Activated CD4-positive, alpha-beta memory T cell treated with anti-CD3 and anti-CD28 coated beads for 36 hours (primary cell): ENCODE measurements at regions of chr4 and their contacts with region 1.

Region 1: DNA sequence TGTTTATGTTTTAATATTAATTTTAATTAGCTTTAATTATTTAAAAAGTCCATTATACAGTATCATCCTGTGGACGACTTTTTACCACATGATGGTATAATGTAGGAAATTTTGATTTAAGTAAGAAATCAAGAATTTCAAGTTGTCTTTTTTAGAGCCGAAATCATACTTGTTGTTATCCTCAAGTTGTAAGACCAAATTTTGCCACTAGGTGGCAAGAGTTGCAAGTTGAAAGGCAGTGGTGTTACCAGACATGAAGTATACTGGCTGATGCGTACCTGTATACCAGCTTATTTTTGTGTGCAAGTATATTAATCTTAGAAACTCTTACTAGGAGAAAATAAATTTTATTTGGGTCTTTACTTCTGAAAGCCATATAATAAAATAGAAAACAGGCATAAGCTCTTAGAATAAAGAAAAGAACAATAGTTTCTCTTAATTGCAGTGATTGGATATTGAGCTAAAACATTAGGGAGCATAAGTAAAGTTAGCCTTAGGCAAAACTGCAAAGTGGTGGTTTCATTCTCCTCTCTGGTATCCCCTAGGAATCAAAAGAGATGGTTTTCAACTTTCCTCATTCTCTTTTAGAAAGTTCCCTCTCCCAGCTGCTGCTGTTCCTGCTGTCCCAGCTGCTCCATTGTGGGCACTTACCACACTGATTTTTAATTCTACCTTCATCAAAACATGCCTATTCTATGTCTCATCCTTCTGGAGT is 118.0 kb upstream of the WDFY3 start:
- DNase-seq: no peak
- H3K4me3 Mint-ChIP-seq: no peak overlapping the region
- H3K27ac Mint-ChIP-seq: no peak overlapping the region
- H3K4me1 Mint-ChIP-seq: no peaks in the 10 kb centered on the region
- H3K27me3 Mint-ChIP-seq: no peaks in the 10 kb centered on the region

Region 2: GRCh38 chr4:84312426-84313012 is 772.0 kb before region 1 on chr4:
- CTCF ChIA-PET with region 1: no interaction called
- POLR2A ChIA-PET with region 1: no interaction called
- intact Hi-C with region 1: no loop called
- DNase-seq: no peak
- H3K4me3 Mint-ChIP-seq: no peak overlapping the region
- H3K27ac Mint-ChIP-seq: no peak overlapping the region
- H3K4me1 Mint-ChIP-seq: no peaks in the 10 kb centered on the region
- H3K27me3 Mint-ChIP-seq: no peaks in the 10 kb centered on the region

Region 3: DNA sequence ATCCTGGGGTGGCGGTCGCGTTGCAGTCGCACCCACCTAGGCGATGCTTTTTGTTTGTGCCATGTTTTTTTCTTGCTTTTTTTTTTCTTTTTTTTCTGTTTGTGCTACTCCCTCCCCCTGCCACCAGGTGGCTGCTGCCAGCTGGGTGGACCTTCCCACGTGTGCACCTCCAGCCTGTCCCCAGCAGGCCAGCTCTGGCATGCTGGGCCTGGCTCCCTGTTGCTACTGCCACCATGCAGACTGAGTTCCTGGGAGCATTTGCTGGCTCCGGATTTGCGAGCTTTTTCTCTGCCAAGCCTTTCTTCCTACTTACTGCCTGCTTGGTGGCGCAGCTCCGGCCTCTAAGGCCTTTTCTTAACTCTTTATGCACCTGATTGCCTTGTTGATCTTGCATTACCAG is 43.1 kb after region 1 on chr4:
- CTCF ChIA-PET with region 1: no interaction called
- POLR2A ChIA-PET with region 1: no interaction called
- intact Hi-C with region 1: no loop called
- DNase-seq: no peak
- H3K4me3 Mint-ChIP-seq: no peak overlapping the region
- H3K27ac Mint-ChIP-seq: no peak overlapping the region
- H3K4me1 Mint-ChIP-seq: no peaks in the 10 kb centered on the region
- H3K27me3 Mint-ChIP-seq: no peaks in the 10 kb centered on the region

Region 4: DNA sequence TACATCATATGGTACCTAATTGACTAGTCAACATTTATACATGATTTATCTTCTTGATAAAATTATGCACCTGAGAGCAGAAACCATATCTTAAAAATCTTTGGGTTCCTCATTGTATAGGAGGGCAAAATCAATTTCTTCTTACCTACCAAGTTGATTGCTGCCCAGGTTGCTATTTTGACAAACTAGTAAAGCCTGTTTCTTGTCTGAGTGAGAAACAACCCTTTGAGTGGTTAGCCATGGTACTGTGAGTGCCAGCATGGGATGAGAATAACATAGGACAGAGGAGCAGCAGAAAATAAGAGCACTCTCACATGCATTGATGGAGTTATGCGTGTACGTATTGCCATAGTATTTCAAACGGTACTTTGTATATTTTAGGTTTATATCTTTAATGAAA is 250.8 kb after region 1 on chr4:
- CTCF ChIA-PET with region 1: no interaction called
- POLR2A ChIA-PET with region 1: no interaction called
- intact Hi-C with region 1: no loop called
- DNase-seq: no peak
- H3K4me3 Mint-ChIP-seq: no peak overlapping the region
- H3K27ac Mint-ChIP-seq: no peak overlapping the region
- H3K4me1 Mint-ChIP-seq: no peaks in the 10 kb centered on the region
- H3K27me3 Mint-ChIP-seq: no peaks in the 10 kb centered on the region

Region 5: GRCh38 chr4:85370430-85371032 is 286.0 kb after region 1 on chr4:
- CTCF ChIA-PET with region 1: no interaction called
- POLR2A ChIA-PET with region 1: no interaction called
- intact Hi-C with region 1: loop called (anchors 2 kb)
- DNase-seq: peak; percentile 9
- H3K4me3 Mint-ChIP-seq: no peak overlapping the region
- H3K27ac Mint-ChIP-seq: no peak overlapping the region
- H3K4me1 Mint-ChIP-seq: no peaks in the 10 kb centered on the region
- H3K27me3 Mint-ChIP-seq: no peaks in the 10 kb centered on the region

Region 6: GRCh38 chr4:85448869-85449626 is 364.5 kb after region 1 on chr4:
- CTCF ChIA-PET with region 1: no interaction called
- POLR2A ChIA-PET with region 1: no interaction called
- intact Hi-C with region 1: no loop called
- DNase-seq: no peak
- H3K4me3 Mint-ChIP-seq: no peak overlapping the region
- H3K27ac Mint-ChIP-seq: no peak overlapping the region
- H3K4me1 Mint-ChIP-seq: no peaks in the 10 kb centered on the region
- H3K27me3 Mint-ChIP-seq: no peaks in the 10 kb centered on the region

Region 7: DNA sequence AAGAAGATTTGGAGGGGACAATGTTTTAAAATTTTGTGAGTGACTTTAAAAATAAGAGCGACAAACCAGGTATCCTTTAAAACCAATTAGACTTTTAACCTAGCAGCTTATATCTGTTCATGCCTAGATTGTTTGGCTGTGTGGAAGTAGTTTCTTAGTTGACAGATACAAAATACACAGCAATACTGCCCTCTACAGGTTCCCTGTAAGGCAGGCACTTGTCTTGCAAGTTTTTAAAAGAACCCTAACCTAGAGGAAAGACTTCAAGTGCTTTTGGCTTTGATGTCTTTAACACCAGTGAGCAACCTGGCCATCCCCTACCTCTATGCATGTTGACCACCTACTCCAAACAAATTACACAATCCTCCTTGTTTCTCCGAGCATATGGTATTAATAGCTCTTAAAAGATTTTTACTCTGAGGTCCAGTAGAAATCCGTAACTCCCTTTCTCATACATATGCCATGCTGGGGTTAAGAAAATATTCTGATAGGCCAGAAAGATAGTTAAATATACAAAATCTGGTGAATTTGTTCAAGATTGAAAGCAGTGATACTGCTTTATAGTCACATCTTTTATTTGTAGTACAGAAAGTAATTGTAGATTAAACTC is 663.5 kb after region 1 on chr4:
- CTCF ChIA-PET with region 1: interaction called, 13 read pairs
- POLR2A ChIA-PET with region 1: no interaction called
- intact Hi-C with region 1: no loop called
- DNase-seq: no peak
- H3K4me3 Mint-ChIP-seq: no peak overlapping the region
- H3K27ac Mint-ChIP-seq: no peak overlapping the region
- H3K4me1 Mint-ChIP-seq: no peaks in the 10 kb centered on the region
- H3K27me3 Mint-ChIP-seq: no peaks in the 10 kb centered on the region

Region 8: DNA sequence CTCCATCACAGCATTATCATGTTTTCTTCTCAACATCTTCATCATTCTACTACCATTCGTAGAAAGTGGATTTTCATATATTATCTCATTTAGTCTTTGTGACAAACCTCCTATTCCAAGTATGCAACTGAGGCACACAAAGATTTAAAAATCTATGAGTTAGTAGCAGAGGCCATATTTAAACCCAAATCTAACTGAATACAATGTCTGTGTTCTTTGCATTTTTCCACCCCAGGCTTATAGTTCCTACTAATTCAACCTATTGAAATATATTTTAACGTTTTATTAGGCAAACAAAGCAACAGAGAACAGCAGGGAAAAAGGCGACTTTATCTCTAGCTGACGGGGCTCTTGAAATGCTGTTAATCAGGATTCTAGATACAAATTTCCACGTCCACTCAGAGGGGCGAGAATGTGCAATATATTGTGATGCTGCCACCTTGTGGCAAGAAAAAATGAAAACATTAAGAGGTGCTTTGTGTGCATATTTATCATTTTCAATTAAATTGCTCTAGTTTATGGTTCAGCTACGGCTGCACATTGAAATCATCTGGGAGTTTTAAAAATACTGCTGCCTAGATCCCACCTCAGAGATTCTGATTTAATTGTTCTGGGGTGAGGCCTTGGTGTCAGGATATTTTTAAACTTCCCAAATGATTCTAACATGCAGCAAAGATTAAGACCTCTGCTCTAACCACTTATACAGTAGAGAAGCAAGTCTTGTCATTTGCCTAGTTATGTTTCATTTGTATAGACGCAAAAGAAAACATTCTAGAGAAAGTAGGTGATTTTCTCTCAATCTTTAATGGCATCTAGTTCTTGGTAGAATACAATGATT is 959.4 kb after region 1 on chr4:
- CTCF ChIA-PET with region 1: interaction called, 7 read pairs
- POLR2A ChIA-PET with region 1: no interaction called
- intact Hi-C with region 1: loop called (anchors 5 kb)
- DNase-seq: no peak
- H3K4me3 Mint-ChIP-seq: no peak overlapping the region
- H3K27ac Mint-ChIP-seq: no peak overlapping the region
- H3K4me1 Mint-ChIP-seq: no peaks in the 10 kb centered on the region
- H3K27me3 Mint-ChIP-seq: no peaks in the 10 kb centered on the region